GM18951 (cell line): ENCODE measurements at regions of chr15 and their contacts with region 1.

Region 1: GRCh38 chr15:39580117-39580484 is 778 bp upstream of the THBS1 start:
- POLR2A ChIP-seq: no peak

Region 2: DNA sequence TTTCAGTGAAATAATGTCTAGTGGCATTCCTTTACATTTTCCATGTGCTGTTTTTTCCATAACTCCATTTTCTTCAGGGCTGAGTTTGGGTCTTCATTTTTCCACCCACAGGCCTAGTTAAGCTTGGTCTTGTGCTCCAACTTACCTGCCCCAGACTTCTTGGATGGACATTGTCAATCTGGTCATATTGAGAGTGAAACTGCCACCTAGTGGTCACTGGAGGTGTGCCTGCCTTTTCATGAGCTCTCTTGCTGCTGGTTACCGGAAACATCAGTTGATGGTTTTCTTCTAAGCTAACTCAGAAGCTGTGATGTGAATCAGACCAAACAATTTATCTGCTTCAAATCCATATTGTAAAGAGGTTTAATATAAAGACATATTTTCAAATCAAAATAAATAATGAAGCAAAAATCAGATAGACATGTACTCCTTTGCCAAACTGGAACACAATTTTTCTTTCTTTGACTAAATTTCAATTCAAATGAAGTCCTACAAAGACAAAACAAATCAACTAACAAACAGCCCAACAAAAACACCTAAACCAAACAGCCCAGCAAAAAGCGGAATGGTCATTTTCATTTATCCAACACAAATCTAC is 880.4 kb before region 1 on chr15:
- in situ Hi-C with region 1: loop called (anchors 25 kb)
- POLR2A ChIP-seq: no peak

Region 3: DNA sequence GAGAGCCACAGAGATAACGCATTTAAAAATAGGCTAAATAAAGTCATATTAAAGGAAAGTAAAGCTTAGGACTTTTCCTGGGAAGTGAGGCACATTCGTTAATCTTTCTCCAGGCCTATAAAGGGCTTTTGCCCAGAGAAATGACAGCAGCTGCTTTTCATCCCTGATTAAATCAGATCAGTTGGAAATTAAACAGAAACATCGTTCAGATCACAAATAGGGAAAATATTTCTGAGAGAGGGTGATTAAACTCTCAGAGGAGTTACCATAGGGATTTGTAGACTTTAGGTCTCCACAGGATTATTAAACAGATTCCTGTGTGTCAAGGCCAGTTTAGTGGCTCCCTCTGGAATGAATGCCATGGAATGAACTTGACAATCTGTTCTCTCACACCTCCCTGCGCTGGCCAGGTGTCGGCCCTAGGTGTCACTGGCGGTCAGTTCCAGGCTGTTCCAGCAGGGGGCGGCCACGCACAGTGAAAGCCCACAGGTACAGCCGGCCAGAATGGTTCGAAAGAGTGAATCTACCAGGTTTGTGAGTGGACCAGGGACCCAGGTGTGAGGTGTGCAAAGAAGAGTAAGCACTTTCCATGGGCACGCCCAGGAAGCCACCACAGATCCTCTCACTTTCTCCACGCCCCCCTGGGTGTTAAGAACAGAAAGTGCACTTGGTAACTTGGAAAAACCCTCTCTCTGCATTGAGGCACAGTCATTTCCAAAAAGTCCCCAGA is 762.5 kb before region 1 on chr15:
- in situ Hi-C with region 1: loop called (anchors 25 kb)
- POLR2A ChIP-seq: no peak

Region 4: GRCh38 chr15:39312984-39313383 is 267.1 kb before region 1 on chr15:
- in situ Hi-C with region 1: loop called (anchors 10 kb)
- POLR2A ChIP-seq: no peak